GM12878 (cell line): ENCODE measurements at regions of chr6 and their contacts with region 1.

Region 1: DNA sequence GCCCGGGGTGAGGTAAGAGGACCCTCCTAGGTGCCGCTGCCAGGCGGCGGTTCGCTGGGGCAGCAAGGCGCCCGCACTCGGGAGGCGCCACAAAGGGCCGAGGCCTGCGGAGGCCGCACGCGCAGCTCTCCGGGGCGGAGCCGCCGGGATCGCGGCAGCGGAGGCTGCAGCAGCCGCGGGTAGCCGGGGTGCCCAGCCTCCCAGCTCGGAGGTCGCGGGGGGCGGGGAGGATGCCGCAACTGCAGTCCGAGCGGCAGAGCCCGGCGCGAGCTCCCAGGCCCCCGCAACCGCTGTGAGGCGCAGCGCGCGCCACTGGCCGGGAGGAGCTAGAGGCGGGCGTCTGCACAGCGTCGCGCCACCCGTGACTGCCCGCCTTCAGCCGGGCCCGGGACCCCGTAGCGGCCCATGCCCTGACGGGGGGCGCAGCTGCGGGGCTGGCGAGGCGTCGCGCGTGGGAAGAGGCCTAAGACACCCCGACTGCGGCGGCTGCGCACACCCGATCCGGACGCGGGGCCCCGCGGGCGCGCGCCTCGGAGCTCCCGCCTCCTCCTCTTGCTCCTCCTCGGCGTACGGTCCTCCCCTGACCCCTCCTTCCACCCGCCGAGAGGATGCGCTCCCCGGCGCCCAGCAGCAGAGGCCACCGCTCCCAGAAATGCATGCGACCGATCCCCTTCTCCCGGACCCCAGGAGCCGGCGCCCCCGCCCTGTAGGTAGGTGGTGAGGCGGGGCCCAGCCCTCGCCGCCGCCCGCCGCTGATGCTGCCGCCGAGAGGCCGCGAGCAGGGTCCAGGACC is at the start of gene NCOA7:
- DNase-seq: no peak
- ATAC-seq: peak; percentile 83
- H3K4me3 ChIP-seq: peak within 1 kb of the TSS; percentile 91
- H3K27ac ChIP-seq: peak within 1 kb of the TSS; percentile 91
- H3K4me1 ChIP-seq: peaks cover 24% of the 10 kb centered on the region
- H3K27me3 ChIP-seq: no peaks in the 10 kb centered on the region
- CTCF ChIP-seq: no peak
- EP300 ChIP-seq: no peak
- POLR2A ChIP-seq: peak; percentile 85
- RAD21 ChIP-seq: no peak
- polyA plus RNA-seq, gene NCOA7: 18.9 to 28.8 TPM

Region 2: GRCh38 chr6:125732398-125732797 is 58.2 kb before region 1 on chr6:
- CTCF ChIA-PET with region 1: no interaction called
- POLR2A ChIA-PET with region 1: no interaction called
- RAD21 ChIA-PET with region 1: no interaction called
- SMC1A ChIA-PET with region 1: no interaction called
- in situ Hi-C with region 1: no loop called
- intact Hi-C with region 1: no loop called
- DNase-seq: no peak
- ATAC-seq: peak; percentile 64
- H3K4me3 ChIP-seq: no peak overlapping the region
- H3K27ac ChIP-seq: no peak overlapping the region
- H3K4me1 ChIP-seq: no peaks in the 10 kb centered on the region
- H3K27me3 ChIP-seq: peaks cover 3 to 4% of the 10 kb centered on the region in 2 experiments; a peak in 3 of 4 replicates
- CTCF ChIP-seq: no peak
- EP300 ChIP-seq: no peak
- POLR2A ChIP-seq: no peak
- RAD21 ChIP-seq: no peak

Region 3: DNA sequence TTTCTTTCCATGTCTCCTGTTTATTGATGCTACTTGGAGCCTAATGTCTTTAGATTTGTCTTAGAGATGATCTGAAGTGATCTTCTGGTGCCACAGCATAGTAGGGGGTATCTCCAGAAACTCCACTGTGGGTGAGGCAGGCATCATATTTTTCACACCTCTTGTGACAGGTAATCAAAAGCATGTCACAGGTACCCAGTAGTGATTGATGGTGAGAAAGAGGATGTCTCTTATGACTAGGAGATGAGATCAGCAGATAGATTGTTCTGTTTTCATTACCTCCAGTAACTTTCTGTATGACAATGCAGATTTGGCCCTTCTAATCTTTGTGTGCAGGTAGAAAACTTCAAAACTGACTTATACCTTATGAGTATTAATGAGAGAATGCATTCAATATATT is 13.7 kb after region 1 on chr6:
- CTCF ChIA-PET with region 1: interaction called, 197 read pairs
- POLR2A ChIA-PET with region 1: interaction called, 79 read pairs
- RAD21 ChIA-PET with region 1: interaction called, 185 read pairs
- SMC1A ChIA-PET with region 1: interaction called, 325 read pairs
- in situ Hi-C with region 1: no loop called
- intact Hi-C with region 1: no loop called
- DNase-seq: peak; percentile 61
- ATAC-seq: peak; percentile 72
- H3K4me3 ChIP-seq: no peak overlapping the region
- H3K27ac ChIP-seq: peak overlapping the region; percentile 49
- H3K4me1 ChIP-seq: peaks cover 69% of the 10 kb centered on the region
- H3K27me3 ChIP-seq: no peaks in the 10 kb centered on the region
- CTCF ChIP-seq: no peak
- EP300 ChIP-seq: peak; percentile 83 to 98; a peak in 3 of 4 replicates
- POLR2A ChIP-seq: no peak
- RAD21 ChIP-seq: no peak

Region 4: DNA sequence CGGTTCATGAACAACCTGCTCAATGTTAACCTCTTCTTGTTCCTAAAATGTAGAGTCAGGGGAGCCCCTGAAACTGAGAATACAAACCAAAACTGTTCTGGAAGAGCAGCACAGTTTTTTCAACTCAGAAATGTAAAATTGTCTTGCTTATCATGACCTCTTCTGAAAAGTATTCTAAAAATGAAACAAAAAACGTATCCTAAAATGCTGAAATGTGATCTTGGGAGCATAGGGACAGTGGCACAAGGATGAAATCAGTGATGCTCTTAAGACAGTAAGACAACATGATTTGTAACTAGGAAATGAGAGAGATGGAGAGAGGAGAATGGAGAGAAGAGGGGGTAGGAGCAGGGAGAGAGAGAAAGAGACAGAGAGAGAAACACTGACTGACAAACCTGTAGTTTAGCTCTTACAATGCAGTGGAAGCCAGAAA is 27.7 kb after region 1 on chr6:
- CTCF ChIA-PET with region 1: interaction called, 197 read pairs
- POLR2A ChIA-PET with region 1: interaction called, 79 read pairs
- RAD21 ChIA-PET with region 1: interaction called, 185 read pairs
- SMC1A ChIA-PET with region 1: interaction called, 325 read pairs
- in situ Hi-C with region 1: no loop called
- intact Hi-C with region 1: no loop called
- DNase-seq: no peak
- ATAC-seq: peak; percentile 30
- H3K4me3 ChIP-seq: peak overlapping the region; percentile 57
- H3K27ac ChIP-seq: peak overlapping the region; percentile 63
- H3K4me1 ChIP-seq: peaks cover 27% of the 10 kb centered on the region
- H3K27me3 ChIP-seq: no peaks in the 10 kb centered on the region
- CTCF ChIP-seq: no peak
- EP300 ChIP-seq: no peak
- POLR2A ChIP-seq: no peak
- RAD21 ChIP-seq: no peak

Region 5: GRCh38 chr6:125858427-125859320 is 68.1 kb after region 1 on chr6:
- CTCF ChIA-PET with region 1: interaction called, 13 read pairs
- POLR2A ChIA-PET with region 1: interaction called, 3 read pairs
- RAD21 ChIA-PET with region 1: interaction called, 4 read pairs
- SMC1A ChIA-PET with region 1: interaction called, 4 read pairs
- in situ Hi-C with region 1: no loop called
- intact Hi-C with region 1: loop called (anchors 5 kb)
- DNase-seq: no peak
- ATAC-seq: peak; percentile 91
- H3K4me3 ChIP-seq: no peak overlapping the region
- H3K27ac ChIP-seq: no peak overlapping the region
- H3K4me1 ChIP-seq: no peaks in the 10 kb centered on the region
- H3K27me3 ChIP-seq: no peaks in the 10 kb centered on the region
- CTCF ChIP-seq: peak; percentile 60 to 64 (median 62); a peak in 5 of 6 replicates
- EP300 ChIP-seq: no peak
- POLR2A ChIP-seq: no peak
- RAD21 ChIP-seq: peak; percentile 63

Region 6: DNA sequence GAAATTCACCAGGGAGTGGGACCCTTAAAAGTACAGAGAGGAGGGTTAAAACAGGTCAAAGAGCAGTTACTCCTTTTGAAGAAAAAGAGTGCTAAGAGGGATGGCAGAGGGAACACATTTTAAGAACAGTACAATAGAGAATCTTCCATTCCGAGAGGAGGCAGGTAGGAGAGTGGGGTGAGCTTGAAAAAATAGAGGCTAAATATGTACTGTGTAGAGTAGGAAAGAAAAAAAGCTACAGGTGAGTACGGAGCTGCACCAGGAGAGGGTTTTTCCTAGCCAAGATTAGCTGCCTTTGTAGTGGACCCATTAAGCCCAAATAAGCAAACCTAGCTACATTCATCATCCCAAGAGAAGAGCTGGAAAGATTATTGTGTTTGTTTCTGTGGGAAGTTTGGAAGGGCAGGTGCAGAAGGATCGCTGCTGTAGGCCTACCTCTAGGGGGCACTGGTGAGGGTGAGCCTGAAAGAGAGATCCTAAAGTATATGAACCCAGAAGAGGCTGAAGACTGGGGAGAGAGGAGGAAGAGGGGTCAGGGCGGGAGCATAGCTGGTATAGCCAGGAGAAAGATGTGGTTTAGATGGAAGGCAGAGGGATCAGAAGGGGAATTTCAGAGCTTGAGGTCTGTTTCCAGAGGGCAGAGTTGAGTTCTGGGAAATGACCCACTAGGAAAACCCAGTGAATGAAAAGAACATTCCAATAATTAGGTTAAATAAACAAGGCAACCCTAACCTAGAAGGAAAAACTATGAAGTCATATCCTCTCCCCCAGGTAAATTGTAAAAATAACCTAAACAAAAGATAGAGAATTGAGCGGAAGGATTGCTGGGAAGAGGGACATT is 115.8 kb after region 1 on chr6:
- CTCF ChIA-PET with region 1: interaction called, 57 read pairs
- POLR2A ChIA-PET with region 1: interaction called, 5 read pairs
- RAD21 ChIA-PET with region 1: interaction called, 12 read pairs
- SMC1A ChIA-PET with region 1: interaction called, 11 read pairs
- in situ Hi-C with region 1: no loop called
- intact Hi-C with region 1: no loop called
- DNase-seq: no peak
- ATAC-seq: peak; percentile 55
- H3K4me3 ChIP-seq: no peak overlapping the region
- H3K27ac ChIP-seq: no peak overlapping the region
- H3K4me1 ChIP-seq: peaks cover 16% of the 10 kb centered on the region
- H3K27me3 ChIP-seq: no peaks in the 10 kb centered on the region
- CTCF ChIP-seq: peak; percentile 63 to 94 (median 91)
- EP300 ChIP-seq: no peak
- POLR2A ChIP-seq: no peak
- RAD21 ChIP-seq: peak; percentile 58

Region 7: DNA sequence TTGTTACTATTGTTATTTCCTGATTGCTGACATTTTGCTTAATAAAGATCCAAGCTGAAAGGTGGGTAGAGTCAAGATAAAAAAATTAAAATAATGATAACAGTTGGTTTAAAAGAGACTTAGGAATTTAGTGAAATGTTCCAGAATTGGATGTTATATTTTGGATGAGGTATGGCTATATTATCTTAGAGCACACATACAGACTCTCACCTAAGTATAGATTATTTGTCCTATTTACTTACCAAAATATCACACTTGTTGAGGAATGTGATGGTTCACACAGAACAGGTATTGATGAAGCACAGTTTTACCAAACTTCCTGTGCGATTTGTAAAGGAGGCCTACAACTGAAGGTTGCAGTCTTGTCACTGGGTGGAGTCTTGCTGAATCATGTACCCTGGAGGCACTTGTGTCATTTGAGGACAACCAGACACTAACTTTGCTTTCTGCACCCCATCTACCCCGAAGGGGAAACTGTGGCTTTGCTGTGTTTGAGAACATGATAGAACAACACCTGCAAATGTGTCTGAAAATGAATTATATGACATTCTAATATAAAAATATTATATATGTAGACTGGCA is 133.5 kb after region 1 on chr6:
- CTCF ChIA-PET with region 1: interaction called, 20 read pairs
- POLR2A ChIA-PET with region 1: interaction called, 17 read pairs
- RAD21 ChIA-PET with region 1: interaction called, 25 read pairs
- SMC1A ChIA-PET with region 1: interaction called, 41 read pairs
- in situ Hi-C with region 1: no loop called
- intact Hi-C with region 1: no loop called
- DNase-seq: no peak
- ATAC-seq: peak; percentile 50
- H3K4me3 ChIP-seq: no peak overlapping the region
- H3K27ac ChIP-seq: 0 out of 2 replicates have a peak overlapping the region, but pooled peaks have one; percentile 19
- H3K4me1 ChIP-seq: peaks cover 3% of the 10 kb centered on the region; the same call in 1 of the 2 replicates
- H3K27me3 ChIP-seq: no peaks in the 10 kb centered on the region
- CTCF ChIP-seq: no peak
- EP300 ChIP-seq: no peak
- POLR2A ChIP-seq: no peak
- RAD21 ChIP-seq: no peak

Region 8: GRCh38 chr6:125986300-125987025 is 195.9 kb after region 1 on chr6 and contains the start of gene TRMT11:
- CTCF ChIA-PET with region 1: interaction called, 15 read pairs
- POLR2A ChIA-PET with region 1: interaction called, 8 read pairs
- RAD21 ChIA-PET with region 1: interaction called, 17 read pairs
- SMC1A ChIA-PET with region 1: interaction called, 7 read pairs
- in situ Hi-C with region 1: no loop called
- intact Hi-C with region 1: loop called (anchors 5 kb)
- DNase-seq: peak; percentile 69
- ATAC-seq: peak; percentile 94
- H3K4me3 ChIP-seq: peak within 1 kb of the TSS; percentile 85
- H3K27ac ChIP-seq: peak within 1 kb of the TSS; percentile 95
- H3K4me1 ChIP-seq: peaks cover 5% of the 10 kb centered on the region; the same call in 1 of the 2 replicates
- H3K27me3 ChIP-seq: no peaks in the 10 kb centered on the region
- CTCF ChIP-seq: no peak
- EP300 ChIP-seq: 0 out of 4 replicates have a peak, but pooled peaks of 1 of the 2 experiments have one; percentile 34
- POLR2A ChIP-seq: peak; percentile 96
- RAD21 ChIP-seq: no peak
- polyA plus RNA-seq, gene TRMT11: 56.8 to 72.4 TPM